Sciatic nerve (tissue), 2 donors: ENCODE measurements at regions of chr10 and their contacts with region 1.

Region 1: GRCh38 chr10:8893102-8893501 is 838.6 kb downstream of the GATA3 start:
- DNase-seq: no peak
- ATAC-seq: no peak

Region 2: DNA sequence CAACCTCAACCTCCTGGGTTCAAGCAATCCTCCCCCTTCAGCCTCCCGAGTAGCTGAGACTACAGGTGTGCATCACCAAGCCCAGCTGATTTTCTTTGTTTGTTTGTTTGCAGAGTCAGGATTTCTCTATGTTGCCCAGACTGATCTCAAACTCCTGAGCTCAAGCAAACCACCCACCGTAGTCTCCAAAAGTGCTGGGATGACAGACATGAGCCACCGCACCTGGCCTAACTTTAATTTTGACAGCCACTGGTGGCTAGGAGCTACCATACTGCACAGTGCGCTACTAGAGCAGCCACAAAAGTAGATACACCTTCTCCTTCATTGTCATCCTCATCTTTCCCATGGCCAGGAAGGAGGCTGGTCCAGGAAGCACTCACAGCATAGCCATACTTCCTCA is 869.8 kb before region 1 on chr10:
- intact Hi-C with region 1: loop called (anchors 5 kb)
- DNase-seq: no peak
- ATAC-seq: no peak

Region 3: GRCh38 chr10:8873310-8873709 is 19.8 kb before region 1 on chr10:
- intact Hi-C with region 1: no loop called
- DNase-seq: no peak
- ATAC-seq: no peak